PC-3 (cell line): ENCODE measurements at regions of chr17 and their contacts with region 1.

Region 1: GRCh38 chr17:75940724-75941441 is at the start of gene FBF1:
- DNase-seq: peak; percentile 98
- ATAC-seq: peak; percentile 99
- H3K4me3 ChIP-seq: peak within 1 kb of the TSS; percentile 88
- H3K27ac ChIP-seq: peak within 1 kb of the TSS; percentile 12; the same call in 1 of the 2 replicates
- H3K4me1 ChIP-seq: peaks cover 11% of the 10 kb centered on the region; the same call in 1 of the 2 replicates
- H3K27me3 ChIP-seq: no peaks in the 10 kb centered on the region
- CTCF ChIP-seq: peak; percentile 24; the same call in 1 of the 2 replicates
- total RNA-seq, gene FBF1: 35.3 and 39.2 TPM in 2 replicates

Region 2: DNA sequence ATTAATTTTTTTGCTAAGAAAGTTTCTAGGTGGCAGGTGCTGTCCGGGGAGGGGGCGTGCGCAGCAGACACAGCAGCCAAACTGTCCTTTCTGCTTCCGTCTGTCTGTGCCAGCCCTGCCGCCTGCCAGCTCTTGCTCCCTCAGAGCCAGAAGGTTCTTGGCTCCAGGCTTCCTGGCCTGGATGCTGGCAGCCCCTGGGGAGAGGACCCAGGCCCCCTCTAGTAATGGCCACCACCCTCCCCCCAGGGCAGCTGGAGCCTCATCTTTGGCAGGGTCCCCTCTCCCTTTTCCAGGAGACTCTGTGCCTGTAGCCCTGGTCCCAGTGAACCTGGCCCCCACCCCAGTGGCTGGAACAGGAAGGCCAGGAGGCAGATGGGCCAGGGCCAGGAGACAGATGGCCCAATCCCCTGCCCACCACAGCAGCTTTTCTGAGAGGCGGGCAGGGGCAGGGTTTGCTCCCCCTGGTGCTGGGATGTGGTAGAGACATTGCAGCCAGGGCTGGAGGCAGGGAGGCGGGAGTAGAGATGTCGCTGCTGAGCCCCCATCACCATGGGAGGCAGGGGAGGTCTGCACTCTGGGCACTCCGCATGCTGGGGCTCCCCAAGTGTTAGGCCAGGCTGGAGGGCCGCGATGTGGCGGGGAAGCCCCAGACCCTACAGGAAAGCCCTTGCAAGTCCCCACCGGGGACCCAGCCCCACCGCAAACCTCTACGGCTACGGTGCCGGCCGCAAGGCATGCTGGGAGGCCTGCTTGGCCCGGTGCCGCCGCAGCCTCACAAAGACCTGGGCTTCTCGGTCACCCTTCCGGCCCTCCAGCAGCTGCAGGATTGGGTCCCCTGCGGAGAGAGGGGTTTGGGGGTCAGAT is 113.4 kb before region 1 on chr17:
- CTCF ChIA-PET with region 1: no interaction called
- POLR2A ChIA-PET with region 1: no interaction called
- intact Hi-C with region 1: no loop called
- DNase-seq: peak; percentile 48
- ATAC-seq: peak; percentile 52
- H3K4me3 ChIP-seq: no peak overlapping the region
- H3K27ac ChIP-seq: no peak overlapping the region
- H3K4me1 ChIP-seq: peaks cover 6% of the 10 kb centered on the region
- H3K27me3 ChIP-seq: no peaks in the 10 kb centered on the region
- CTCF ChIP-seq: peak; percentile 78

Region 3: GRCh38 chr17:75872434-75873351 is 68.2 kb before region 1 on chr17:
- CTCF ChIA-PET with region 1: no interaction called
- POLR2A ChIA-PET with region 1: no interaction called
- intact Hi-C with region 1: no loop called
- DNase-seq: peak; percentile 80
- ATAC-seq: peak; percentile 16
- H3K4me3 ChIP-seq: no peak overlapping the region
- H3K27ac ChIP-seq: peak overlapping the region; percentile 62
- H3K4me1 ChIP-seq: peaks cover 36% of the 10 kb centered on the region
- H3K27me3 ChIP-seq: no peaks in the 10 kb centered on the region
- CTCF ChIP-seq: no peak

Region 4: GRCh38 chr17:75927286-75927922 is 13.5 kb before region 1 on chr17:
- CTCF ChIA-PET with region 1: no interaction called
- POLR2A ChIA-PET with region 1: no interaction called
- intact Hi-C with region 1: no loop called
- DNase-seq: no peak
- ATAC-seq: peak; percentile 55
- H3K4me3 ChIP-seq: no peak overlapping the region
- H3K27ac ChIP-seq: no peak overlapping the region
- H3K4me1 ChIP-seq: no peaks in the 10 kb centered on the region
- H3K27me3 ChIP-seq: no peaks in the 10 kb centered on the region
- CTCF ChIP-seq: peak; percentile 50; the same call in 1 of the 2 replicates

Region 5: GRCh38 chr17:75959051-75959838 is 18.4 kb after region 1 on chr17:
- CTCF ChIA-PET with region 1: interaction called, 4 read pairs
- POLR2A ChIA-PET with region 1: no interaction called
- intact Hi-C with region 1: loop called (anchors 2 kb)
- DNase-seq: peak; percentile 79
- ATAC-seq: peak; percentile 94
- H3K4me3 ChIP-seq: peak overlapping the region; percentile 36; the same call in 1 of the 2 replicates
- H3K27ac ChIP-seq: peak overlapping the region; percentile 78
- H3K4me1 ChIP-seq: peaks cover 21% of the 10 kb centered on the region
- H3K27me3 ChIP-seq: no peaks in the 10 kb centered on the region
- CTCF ChIP-seq: no peak

Region 6: GRCh38 chr17:75965475-75965874 is 24.6 kb after region 1 on chr17:
- CTCF ChIA-PET with region 1: no interaction called
- POLR2A ChIA-PET with region 1: interaction called, 11 read pairs
- intact Hi-C with region 1: no loop called
- DNase-seq: no peak
- ATAC-seq: no peak
- H3K4me3 ChIP-seq: no peak overlapping the region
- H3K27ac ChIP-seq: no peak overlapping the region
- H3K4me1 ChIP-seq: peaks cover 7% of the 10 kb centered on the region
- H3K27me3 ChIP-seq: no peaks in the 10 kb centered on the region
- CTCF ChIP-seq: no peak

Region 7: GRCh38 chr17:75978938-75979704 is 38.2 kb after region 1 on chr17 and contains the starts of genes ACOX1 and TEN1:
- CTCF ChIA-PET with region 1: interaction called, 3 read pairs
- POLR2A ChIA-PET with region 1: interaction called, 9 read pairs
- intact Hi-C with region 1: loop called (anchors 2 kb)
- DNase-seq: peak; percentile 98
- ATAC-seq: peak; percentile 93
- H3K4me3 ChIP-seq: peak within 1 kb of the TSS; percentile 94
- H3K27ac ChIP-seq: peak within 1 kb of the TSS; percentile 82
- H3K4me1 ChIP-seq: peaks cover 40% of the 10 kb centered on the region
- H3K27me3 ChIP-seq: no peaks in the 10 kb centered on the region
- CTCF ChIP-seq: peak; percentile 45; the same call in 1 of the 2 replicates
- total RNA-seq, gene ACOX1: 63.2 and 74.9 TPM in 2 replicates
- total RNA-seq, gene TEN1: 58.3 and 62.4 TPM in 2 replicates

Region 8: DNA sequence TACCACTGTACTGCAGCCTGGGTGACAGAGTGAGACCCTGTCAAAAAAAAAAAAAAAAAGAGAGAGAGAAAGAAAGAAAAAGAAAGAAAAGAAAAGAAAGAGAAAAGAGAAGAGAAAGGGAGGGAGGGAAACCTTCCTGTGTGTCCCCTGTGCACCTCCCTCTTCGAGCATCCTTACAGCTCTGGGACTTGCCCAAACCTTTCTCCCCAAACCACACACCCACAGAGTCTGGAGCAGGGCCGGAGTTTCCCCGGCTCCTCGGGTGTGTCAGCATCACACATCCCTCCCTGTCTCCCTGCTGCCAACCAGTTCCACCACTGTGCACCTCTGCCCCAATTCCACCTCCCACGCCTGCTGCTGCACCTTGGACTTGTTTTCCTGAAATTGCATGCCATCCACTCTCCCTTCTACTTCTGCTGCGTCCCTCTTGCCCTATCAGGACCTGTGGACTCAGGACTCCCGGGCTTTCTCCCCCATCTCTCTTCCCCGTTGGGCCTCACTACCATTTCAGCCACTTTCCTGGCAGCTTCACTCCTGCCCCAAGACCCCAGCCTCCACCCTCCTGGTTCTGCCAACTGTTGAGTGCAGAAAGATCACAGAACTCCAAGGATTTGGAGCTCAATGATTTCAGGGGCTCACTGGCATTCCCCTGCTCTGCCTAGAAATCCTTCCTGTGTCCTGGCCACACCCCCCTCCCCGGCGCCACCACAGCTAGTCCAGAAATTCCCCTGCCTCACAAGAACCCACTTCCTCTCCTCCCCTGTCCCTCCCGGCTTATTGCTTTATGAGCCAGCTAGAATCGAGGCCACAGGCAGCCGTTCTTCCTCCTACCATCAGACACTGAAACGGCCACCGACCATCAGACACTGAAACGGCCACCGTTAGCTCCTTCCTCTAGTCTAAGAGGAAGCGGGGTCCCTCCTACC is 56.0 kb after region 1 on chr17:
- CTCF ChIA-PET with region 1: no interaction called
- POLR2A ChIA-PET with region 1: no interaction called
- intact Hi-C with region 1: loop called (anchors 2 kb)
- DNase-seq: peak; percentile 90
- ATAC-seq: peak; percentile 94
- H3K4me3 ChIP-seq: peak overlapping the region; percentile 61
- H3K27ac ChIP-seq: peak overlapping the region; percentile 97
- H3K4me1 ChIP-seq: peaks cover 32% of the 10 kb centered on the region
- H3K27me3 ChIP-seq: no peaks in the 10 kb centered on the region
- CTCF ChIP-seq: no peak